Activated T-helper 1 cell treated with anti-CD3 and anti-CD28 coated beads, Interleukin-12 subunit alpha, Interleukin-12 subunit beta, Interleukin-2, Interleukin-4 antibody, amounts not matched to agents 30 ng/mL and 10 ng/mL and 1 ng/mL, durations not matched to agents 14 hours and 24 hours and 36 hours (primary cell): ENCODE measurements at regions of chr11 and their contacts with region 1.

Region 1: DNA sequence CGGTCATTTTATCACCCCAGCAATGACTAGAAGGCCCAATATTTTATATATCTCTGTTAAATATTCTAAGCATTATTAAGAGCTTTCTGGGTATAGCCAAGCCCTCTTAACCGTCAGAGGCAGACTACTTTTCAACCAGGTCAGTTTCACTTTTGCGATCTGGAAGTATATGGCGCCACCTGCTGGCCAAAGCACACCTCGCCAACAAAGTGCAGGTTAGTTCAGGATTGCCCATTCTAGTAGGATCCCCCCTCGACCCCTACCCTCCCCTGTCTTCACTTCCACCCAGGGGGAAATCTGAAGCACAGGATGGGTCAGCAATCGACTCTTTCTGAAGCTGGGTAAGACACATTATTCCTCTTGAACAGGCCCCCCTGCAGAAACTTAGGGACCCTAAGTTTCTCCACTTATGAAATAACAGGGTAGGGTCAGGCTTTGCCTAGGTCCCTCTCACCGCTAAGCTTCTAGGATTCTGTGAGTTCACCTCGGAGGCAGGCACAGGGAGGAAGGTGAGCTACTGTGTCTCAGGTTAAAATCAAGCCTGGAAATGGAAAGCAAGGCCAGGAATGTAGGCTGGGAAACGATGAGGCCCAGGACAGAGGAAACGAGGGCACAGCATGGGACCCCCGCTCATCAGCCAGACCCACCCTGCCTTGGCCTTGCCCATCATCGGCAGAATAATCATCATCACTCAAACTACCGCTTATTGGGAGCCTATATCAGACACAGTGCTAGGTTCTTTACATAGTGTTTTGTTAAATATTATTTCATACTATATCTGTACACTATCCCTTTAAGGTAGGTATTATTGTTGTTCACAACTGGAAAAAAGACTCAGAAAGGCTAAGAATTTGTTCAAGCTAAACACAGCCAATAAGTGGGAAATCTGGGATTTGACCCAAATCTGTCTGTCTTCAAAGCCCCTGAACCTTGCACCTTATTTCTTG is 35.6 kb downstream of the KCNJ1 start:
- DNase-seq: peak; percentile 75
- H3K4me3 Mint-ChIP-seq: peak overlapping the region; percentile 68
- H3K27ac Mint-ChIP-seq: peak overlapping the region; percentile 90
- H3K4me1 Mint-ChIP-seq: peaks cover 31% of the 10 kb centered on the region
- H3K27me3 Mint-ChIP-seq: peaks cover 9% of the 10 kb centered on the region

Region 2: DNA sequence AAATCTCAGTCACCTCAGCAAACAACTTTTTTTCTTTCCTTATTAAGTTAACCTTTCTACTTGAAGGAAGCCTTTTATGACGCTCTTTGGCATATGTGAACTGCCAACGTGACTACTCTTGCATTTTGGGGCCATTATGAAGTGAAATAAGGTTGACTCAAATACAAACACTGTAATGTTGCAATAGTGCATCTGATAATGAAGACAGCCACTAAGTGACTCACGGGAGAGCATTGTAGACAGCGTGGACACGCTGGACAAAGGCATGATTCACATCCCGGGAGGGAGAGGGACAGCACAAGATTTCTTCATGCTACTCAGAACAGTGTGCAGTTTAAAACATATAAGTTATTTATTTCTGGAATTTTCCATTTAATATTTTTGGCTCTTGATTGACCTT is 804.9 kb before region 1 on chr11:
- intact Hi-C with region 1: loop called (anchors 1 kb)
- DNase-seq: no peak
- H3K4me3 Mint-ChIP-seq: no peak overlapping the region
- H3K27ac Mint-ChIP-seq: no peak overlapping the region
- H3K4me1 Mint-ChIP-seq: peaks cover 4% of the 10 kb centered on the region
- H3K27me3 Mint-ChIP-seq: peaks cover 42% of the 10 kb centered on the region

Region 3: DNA sequence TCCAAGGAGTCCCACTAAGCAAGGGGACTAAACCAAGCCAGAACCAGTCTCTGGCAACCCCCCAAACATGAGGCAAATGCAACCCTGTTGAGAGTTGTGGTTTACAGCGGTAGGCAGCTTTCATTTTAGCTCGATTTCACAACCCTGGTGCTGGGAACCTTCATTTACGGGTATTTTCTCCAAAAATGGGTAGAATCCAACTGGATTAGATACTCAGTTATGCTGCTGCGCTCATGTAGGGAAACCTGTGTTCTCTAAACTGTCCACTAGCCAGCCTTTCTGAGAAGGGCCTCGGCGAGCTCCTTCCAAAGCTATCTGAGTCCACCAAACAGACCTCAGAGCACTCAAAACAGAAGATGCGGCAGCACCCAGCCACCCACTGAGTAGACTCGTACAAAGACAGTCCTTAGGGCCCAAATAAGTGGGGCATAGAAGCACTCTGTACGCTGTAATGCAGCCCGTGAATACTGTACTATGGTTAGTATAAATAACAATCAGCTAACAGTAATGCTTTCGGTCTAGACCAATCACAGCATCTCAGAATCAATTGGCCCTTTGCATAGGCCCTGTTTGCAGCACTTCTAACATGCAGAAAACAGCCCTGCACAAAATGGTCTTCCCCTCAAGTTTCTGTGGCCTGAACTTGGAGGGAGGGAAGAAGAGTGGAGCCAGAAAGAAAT is 348.8 kb before region 1 on chr11:
- intact Hi-C with region 1: loop called (anchors 5 kb)
- DNase-seq: no peak
- H3K4me3 Mint-ChIP-seq: peak overlapping the region; percentile 80
- H3K27ac Mint-ChIP-seq: peak overlapping the region; percentile 95
- H3K4me1 Mint-ChIP-seq: peaks cover 96% of the 10 kb centered on the region
- H3K27me3 Mint-ChIP-seq: no peaks in the 10 kb centered on the region

Region 4: DNA sequence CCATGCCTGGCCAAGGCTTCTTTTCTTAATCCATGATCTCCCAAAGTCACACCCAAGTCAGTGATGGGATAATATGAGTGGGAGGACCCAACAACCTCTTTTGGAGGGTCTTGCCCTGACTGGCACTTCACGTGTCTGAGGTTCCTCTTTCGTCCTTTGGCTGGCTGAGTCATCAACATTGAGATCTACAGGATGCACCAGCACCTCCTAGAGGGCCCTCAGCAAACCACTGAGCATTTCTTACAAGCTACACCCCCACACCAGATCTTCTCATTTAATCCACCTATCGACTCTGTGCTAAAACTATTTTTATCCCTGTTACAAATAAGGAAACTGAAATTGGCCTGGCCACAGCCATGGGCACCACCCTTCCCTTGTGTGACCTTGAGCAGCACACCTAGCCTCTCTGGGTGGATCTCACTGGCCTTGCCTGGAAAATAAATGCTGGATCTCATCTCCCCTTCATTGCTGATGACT is 74.2 kb before region 1 on chr11:
- intact Hi-C with region 1: loop called (anchors 2 kb)
- DNase-seq: peak; percentile 55
- H3K4me3 Mint-ChIP-seq: peak overlapping the region; percentile 63
- H3K27ac Mint-ChIP-seq: peak overlapping the region; percentile 95
- H3K4me1 Mint-ChIP-seq: peaks cover 68% of the 10 kb centered on the region
- H3K27me3 Mint-ChIP-seq: no peaks in the 10 kb centered on the region

Region 5: GRCh38 chr11:128776424-128777284 is 54.8 kb before region 1 on chr11:
- intact Hi-C with region 1: loop called (anchors 1 kb)
- DNase-seq: no peak
- H3K4me3 Mint-ChIP-seq: no peak overlapping the region
- H3K27ac Mint-ChIP-seq: peak overlapping the region; percentile 45
- H3K4me1 Mint-ChIP-seq: peaks cover 40% of the 10 kb centered on the region
- H3K27me3 Mint-ChIP-seq: no peaks in the 10 kb centered on the region

Region 6: GRCh38 chr11:128814856-128815705 is 16.4 kb before region 1 on chr11:
- intact Hi-C with region 1: no loop called
- DNase-seq: no peak
- H3K4me3 Mint-ChIP-seq: no peak overlapping the region
- H3K27ac Mint-ChIP-seq: no peak overlapping the region
- H3K4me1 Mint-ChIP-seq: peaks cover 13% of the 10 kb centered on the region
- H3K27me3 Mint-ChIP-seq: no peaks in the 10 kb centered on the region

Region 7: DNA sequence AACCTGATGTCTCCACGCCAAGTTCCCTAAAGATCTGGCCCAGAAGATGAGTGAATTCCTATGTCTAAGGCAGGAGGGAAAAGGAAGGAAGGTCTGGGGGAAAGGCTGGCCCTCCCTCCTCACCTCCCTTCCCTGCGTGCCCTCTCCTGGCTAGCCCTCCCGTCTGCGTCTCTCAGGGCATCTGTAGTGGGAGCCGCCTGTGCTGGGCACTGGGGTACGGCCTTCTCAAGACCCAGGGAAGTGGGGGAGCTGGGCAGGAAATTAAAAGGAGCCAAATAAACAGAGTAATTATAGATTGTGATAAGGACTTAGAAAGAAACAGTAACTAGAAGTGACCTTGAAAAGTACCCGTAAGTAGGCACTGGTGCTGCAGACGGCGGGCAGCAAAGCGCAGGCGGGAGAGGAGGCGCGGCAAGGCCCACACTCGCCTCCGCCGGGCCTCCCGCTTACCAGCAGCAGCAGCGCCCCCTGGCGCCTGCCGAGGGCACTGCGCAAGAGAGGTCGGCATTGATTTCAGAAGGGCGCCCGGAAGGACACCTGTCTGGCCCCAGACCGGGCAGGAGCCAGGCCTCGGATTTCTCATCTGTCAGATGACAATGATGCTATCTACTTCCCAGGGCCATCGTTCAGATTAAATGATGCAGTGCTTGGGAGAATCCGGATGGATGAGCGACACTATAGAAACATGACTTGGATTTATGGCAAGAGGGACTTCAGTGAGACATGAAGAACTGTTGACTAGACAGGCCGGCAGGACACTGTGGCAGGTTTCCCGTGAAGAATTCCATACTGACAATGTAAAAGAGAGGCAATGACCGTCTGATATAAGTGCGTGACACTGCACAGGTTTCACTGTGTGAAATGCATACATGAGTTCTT is 28.4 kb after region 1 on chr11:
- intact Hi-C with region 1: loop called (anchors 2 kb)
- DNase-seq: peak; percentile 71
- H3K4me3 Mint-ChIP-seq: no peak overlapping the region
- H3K27ac Mint-ChIP-seq: no peak overlapping the region
- H3K4me1 Mint-ChIP-seq: peaks cover 6% of the 10 kb centered on the region
- H3K27me3 Mint-ChIP-seq: peaks cover 13% of the 10 kb centered on the region